Activated CD4-positive, alpha-beta memory T cell treated with anti-CD3 and anti-CD28 coated beads for 36 hours (primary cell): ENCODE measurements at regions of chr2 and their contacts with region 1.

Region 1: DNA sequence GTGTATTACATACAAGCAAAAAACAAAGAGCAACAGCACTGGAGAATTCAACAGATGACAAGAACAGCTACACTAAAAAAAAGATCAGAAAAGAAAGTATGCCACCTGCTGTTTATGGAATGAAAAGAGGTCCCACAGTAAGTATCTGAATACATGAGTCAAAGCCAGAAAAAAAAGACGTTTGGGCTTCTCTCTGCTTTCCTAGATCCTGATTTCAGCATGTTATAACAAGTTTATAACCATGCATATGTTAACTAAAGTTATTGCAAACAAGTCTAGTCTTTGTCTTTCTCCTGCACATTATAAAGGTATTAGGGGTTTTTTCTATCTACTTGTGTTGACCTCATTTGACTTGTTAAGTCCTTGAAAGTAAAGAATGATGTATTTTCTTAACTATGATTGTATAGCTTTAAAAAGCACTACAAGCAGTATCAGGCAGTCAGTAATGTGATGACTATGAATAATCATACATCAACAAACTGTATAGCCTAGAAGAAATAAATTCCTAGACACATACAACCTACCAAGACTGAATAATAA is 108.5 kb upstream of the COL5A2 start:
- DNase-seq: no peak
- H3K4me3 Mint-ChIP-seq: no peak overlapping the region
- H3K27ac Mint-ChIP-seq: no peak overlapping the region
- H3K4me1 Mint-ChIP-seq: peaks cover 38% of the 10 kb centered on the region
- H3K27me3 Mint-ChIP-seq: no peaks in the 10 kb centered on the region

Region 2: DNA sequence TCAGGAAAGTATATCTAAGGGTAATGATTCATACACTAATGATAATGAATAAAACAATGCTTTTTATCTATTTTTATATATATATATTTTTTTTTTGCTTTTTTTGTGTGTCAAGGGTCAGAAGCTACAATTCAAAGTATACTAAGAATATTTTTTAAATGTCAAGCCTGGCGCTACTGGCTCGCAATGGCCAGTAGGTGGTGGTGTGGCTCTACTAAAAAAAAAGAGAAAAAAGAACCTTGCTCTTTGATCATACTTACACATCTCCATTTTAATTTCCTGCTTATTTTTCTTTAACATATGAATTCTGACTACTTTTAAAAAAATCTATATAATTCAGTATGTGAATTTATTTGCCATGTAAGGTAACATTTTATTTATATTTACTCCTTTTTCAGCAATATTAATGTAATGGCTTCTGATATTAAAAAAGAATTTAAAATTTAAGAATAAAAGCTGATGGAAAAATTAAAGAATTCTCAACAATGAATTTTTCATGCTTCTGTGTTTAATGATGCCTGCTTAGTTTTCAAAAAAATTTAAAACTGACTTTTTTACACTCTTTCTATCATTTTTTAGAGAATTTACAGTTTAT is 763.4 kb before region 1 on chr2:
- CTCF ChIA-PET with region 1: no interaction called
- POLR2A ChIA-PET with region 1: no interaction called
- intact Hi-C with region 1: loop called (anchors 1 kb)
- DNase-seq: peak; percentile 22
- H3K4me3 Mint-ChIP-seq: no peak overlapping the region
- H3K27ac Mint-ChIP-seq: no peak overlapping the region
- H3K4me1 Mint-ChIP-seq: no peaks in the 10 kb centered on the region
- H3K27me3 Mint-ChIP-seq: peaks cover 3% of the 10 kb centered on the region

Region 3: DNA sequence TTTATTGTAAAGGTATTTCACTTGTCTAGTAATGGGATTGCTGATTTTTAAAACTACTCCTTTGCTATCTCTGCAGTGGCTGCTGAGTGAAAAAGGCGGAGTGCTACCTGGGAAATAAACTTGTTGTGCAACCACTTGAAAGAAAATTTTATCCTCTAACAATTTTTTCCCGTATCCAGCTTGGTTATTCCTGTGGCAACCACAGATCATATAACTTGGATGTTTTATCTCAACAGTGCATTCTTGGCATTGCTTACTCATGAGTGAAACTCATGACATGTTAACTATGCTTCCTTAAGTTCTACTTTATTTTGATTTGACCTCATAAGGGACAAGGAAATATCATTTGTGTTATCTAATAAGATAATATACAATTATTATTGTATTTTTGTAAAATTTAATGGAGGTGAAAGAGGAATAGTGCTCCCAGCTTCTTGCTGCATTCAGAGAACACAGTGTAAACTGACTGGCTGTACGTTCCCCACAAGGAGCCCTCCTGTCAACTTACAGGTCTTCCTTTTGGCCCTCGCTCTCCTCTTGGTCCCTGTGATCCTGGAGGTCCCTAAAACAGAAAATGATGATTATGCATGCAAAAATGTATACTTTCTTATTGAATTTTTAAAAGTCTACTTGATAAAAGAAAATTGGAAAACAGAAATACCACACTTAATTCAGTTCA is 191.1 kb before region 1 on chr2:
- CTCF ChIA-PET with region 1: interaction called, 20 read pairs
- POLR2A ChIA-PET with region 1: no interaction called
- intact Hi-C with region 1: loop called (anchors 1 kb)
- DNase-seq: no peak
- H3K4me3 Mint-ChIP-seq: no peak overlapping the region
- H3K27ac Mint-ChIP-seq: no peak overlapping the region
- H3K4me1 Mint-ChIP-seq: no peaks in the 10 kb centered on the region
- H3K27me3 Mint-ChIP-seq: no peaks in the 10 kb centered on the region

Region 4: DNA sequence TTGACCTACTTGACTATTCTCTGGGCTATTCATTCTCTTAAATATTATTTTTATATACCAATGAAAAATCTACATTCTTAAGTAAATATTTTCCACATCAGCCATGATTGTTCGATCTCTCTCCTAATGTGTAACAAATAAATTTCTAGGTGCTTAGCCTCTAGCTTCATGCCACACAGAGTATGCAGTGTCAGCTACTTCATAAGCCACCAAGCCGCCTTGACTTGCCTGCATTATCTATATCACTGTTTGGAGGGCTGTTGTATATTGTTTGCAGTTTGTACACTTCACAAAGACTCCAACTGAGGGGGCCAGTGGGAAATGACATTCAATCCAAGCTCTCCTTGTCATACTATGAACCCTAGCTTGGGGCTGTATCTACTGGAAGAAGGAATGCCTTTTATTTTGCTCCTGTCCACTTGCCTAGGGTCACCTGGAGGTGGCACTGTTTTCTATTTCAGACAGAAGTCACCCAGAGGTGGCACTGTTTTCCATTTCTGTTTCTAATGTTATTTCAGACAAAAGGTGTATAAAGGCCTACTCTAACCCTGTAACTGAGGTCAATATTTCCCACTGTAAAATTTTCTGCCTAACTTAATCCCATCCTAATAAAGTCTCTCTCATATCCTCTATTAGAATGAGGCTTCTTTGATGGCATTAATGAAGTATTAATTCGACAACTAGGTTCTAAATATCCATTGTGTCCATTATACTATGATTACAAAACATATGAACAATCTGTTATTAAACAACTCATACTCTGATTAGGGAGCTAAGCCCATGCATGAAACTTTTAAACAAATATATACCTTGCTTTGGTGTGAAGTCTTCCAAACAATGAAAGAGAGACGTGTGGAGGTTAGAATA is 144.9 kb before region 1 on chr2:
- CTCF ChIA-PET with region 1: interaction called, 54 read pairs
- POLR2A ChIA-PET with region 1: no interaction called
- intact Hi-C with region 1: loop called (anchors 1 kb)
- DNase-seq: peak; percentile 52
- H3K4me3 Mint-ChIP-seq: no peak overlapping the region
- H3K27ac Mint-ChIP-seq: no peak overlapping the region
- H3K4me1 Mint-ChIP-seq: no peaks in the 10 kb centered on the region
- H3K27me3 Mint-ChIP-seq: no peaks in the 10 kb centered on the region

Region 5: DNA sequence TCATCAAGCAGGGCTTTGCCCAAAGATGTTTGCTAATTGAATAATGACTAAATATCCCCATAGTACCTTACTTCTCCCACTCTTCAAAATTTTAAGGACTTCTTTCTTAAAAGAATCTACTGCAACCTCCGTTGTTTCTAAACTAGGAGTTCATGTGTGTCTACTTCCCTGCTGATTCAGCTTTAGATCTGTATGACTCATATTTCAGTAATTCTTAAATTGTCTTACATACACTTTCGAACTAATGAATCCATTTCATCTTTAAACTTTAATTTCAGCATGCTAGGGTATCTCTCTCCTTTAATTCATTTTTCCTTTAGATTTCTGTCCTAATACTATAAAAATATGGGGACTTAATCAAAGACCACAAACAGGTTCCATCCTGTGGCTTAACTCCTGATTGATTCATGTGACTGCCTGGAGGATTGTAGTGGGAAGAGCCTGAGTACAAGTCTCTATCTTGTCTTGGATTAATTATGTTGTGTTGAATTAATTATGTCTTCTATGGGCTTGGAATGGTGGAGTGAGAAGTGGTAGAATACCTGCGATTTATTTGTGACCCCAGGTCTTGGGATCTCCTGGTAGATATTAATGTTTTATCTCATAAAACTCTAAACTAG is 83.6 kb before region 1 on chr2:
- CTCF ChIA-PET with region 1: no interaction called
- POLR2A ChIA-PET with region 1: no interaction called
- intact Hi-C with region 1: loop called (anchors 1 kb)
- DNase-seq: no peak
- H3K4me3 Mint-ChIP-seq: peak overlapping the region; percentile 36
- H3K27ac Mint-ChIP-seq: peak overlapping the region; percentile 50
- H3K4me1 Mint-ChIP-seq: peaks cover 16% of the 10 kb centered on the region
- H3K27me3 Mint-ChIP-seq: peaks cover 2% of the 10 kb centered on the region

Region 6: GRCh38 chr2:189267925-189268579 is 20.0 kb before region 1 on chr2:
- CTCF ChIA-PET with region 1: no interaction called
- POLR2A ChIA-PET with region 1: no interaction called
- intact Hi-C with region 1: no loop called
- DNase-seq: no peak
- H3K4me3 Mint-ChIP-seq: no peak overlapping the region
- H3K27ac Mint-ChIP-seq: no peak overlapping the region
- H3K4me1 Mint-ChIP-seq: no peaks in the 10 kb centered on the region
- H3K27me3 Mint-ChIP-seq: no peaks in the 10 kb centered on the region

Region 7: GRCh38 chr2:189302274-189302948 is 14.4 kb after region 1 on chr2:
- CTCF ChIA-PET with region 1: interaction called, 3 read pairs
- POLR2A ChIA-PET with region 1: no interaction called
- intact Hi-C with region 1: loop called (anchors 2 kb)
- DNase-seq: no peak
- H3K4me3 Mint-ChIP-seq: peak overlapping the region; percentile 0
- H3K27ac Mint-ChIP-seq: peak overlapping the region; percentile 83
- H3K4me1 Mint-ChIP-seq: peaks cover 72% of the 10 kb centered on the region
- H3K27me3 Mint-ChIP-seq: no peaks in the 10 kb centered on the region

Region 8: GRCh38 chr2:189337656-189338055 is 49.6 kb after region 1 on chr2:
- CTCF ChIA-PET with region 1: no interaction called
- POLR2A ChIA-PET with region 1: no interaction called
- intact Hi-C with region 1: no loop called
- DNase-seq: no peak
- H3K4me3 Mint-ChIP-seq: no peak overlapping the region
- H3K27ac Mint-ChIP-seq: no peak overlapping the region
- H3K4me1 Mint-ChIP-seq: no peaks in the 10 kb centered on the region
- H3K27me3 Mint-ChIP-seq: no peaks in the 10 kb centered on the region